A673 (cell line): ENCODE measurements at regions of chr14 and their contacts with region 1.

Region 1: DNA sequence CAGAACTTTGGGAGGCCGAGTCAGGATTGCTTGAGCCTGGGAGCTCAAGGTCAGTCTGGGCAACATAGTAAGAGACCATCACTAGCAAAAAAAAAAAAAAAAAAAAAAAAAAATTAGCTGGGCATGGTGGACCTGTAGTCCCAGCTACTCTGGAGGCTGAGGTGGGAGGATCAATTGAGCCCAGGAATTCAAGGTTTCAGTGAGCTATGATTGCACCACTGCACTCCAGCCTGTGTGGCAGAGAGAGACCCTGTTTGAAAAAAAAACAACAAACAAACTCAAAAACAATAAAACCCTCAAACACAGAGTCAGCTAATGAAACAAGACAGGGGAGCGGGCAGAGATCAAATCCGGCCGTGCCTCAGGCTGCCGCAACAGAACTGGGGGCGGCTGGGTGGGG is 41.7 kb upstream of the DLK1 start:
- DNase-seq: no peak
- H3K4me3 ChIP-seq: no peak overlapping the region
- H3K27ac ChIP-seq: no peak overlapping the region
- H3K4me1 ChIP-seq: peaks cover 12% of the 10 kb centered on the region
- H3K27me3 ChIP-seq: no peaks in the 10 kb centered on the region
- CTCF ChIP-seq: no peak

Region 2: GRCh38 chr14:100375963-100376735 is 308.8 kb before region 1 on chr14:
- CTCF ChIA-PET with region 1: no interaction called
- POLR2A ChIA-PET with region 1: interaction called, 13 read pairs
- intact Hi-C with region 1: no loop called
- DNase-seq: peak; percentile 97
- H3K4me3 ChIP-seq: peak within 1 kb of the TSS; percentile 99
- H3K27ac ChIP-seq: peak within 1 kb of the TSS; percentile 96
- H3K4me1 ChIP-seq: peaks cover 5% of the 10 kb centered on the region
- H3K27me3 ChIP-seq: no peaks in the 10 kb centered on the region
- CTCF ChIP-seq: no peak